GM13977 (cell line): ENCODE measurements at regions of chr1 and their contacts with region 1.

Region 1: GRCh38 chr1:111755331-111756123 is at the start of gene DDX20:
- DNase-seq: peak; percentile 97
- CTCF ChIP-seq: peak; percentile 91

Region 2: GRCh38 chr1:111648806-111649205 is 106.7 kb before region 1 on chr1:
- in situ Hi-C with region 1: no loop called
- DNase-seq: no peak
- CTCF ChIP-seq: no peak

Region 3: GRCh38 chr1:111719674-111720132 is 35.8 kb before region 1 on chr1:
- in situ Hi-C with region 1: loop called (anchors 5 kb)
- DNase-seq: no peak
- CTCF ChIP-seq: no peak